ENCODE measurements at regions of chr10 and their contacts with region 1.

Region 1: DNA sequence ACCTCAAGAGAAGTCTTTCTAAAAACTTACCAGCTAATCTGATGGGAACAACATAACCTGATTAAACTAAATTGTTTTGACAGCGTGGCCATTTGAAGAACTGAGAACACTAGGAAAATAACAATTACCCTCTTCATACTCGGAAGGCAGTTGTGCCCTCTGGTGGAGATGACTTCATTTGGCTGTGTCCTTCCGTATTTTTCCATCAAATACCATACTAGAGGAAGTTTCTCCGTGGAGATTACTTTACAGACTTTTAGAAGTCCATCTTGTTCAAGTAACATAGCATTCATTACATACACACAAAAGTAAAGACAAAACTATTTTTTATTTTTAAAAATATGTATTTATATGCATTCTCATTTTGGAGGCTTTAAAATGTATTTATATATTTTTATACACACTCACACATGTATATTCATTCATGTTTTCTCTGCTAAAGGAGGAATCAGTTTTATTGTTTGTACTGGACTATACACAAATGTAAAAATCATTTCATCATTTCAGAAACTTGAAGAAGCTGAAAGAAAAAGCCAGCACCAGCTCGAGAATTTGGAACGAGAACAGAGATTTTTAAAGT is 25.2 kb downstream of the SMNDC1 start:
- DNase-seq: peak; percentile 73
- H3K4me3 ChIP-seq: peak overlapping the region; percentile 7
- H3K27ac ChIP-seq: no peak overlapping the region
- H3K4me1 ChIP-seq: peaks cover 21% of the 10 kb centered on the region
- CTCF ChIP-seq: peak; percentile 98

Region 2: DNA sequence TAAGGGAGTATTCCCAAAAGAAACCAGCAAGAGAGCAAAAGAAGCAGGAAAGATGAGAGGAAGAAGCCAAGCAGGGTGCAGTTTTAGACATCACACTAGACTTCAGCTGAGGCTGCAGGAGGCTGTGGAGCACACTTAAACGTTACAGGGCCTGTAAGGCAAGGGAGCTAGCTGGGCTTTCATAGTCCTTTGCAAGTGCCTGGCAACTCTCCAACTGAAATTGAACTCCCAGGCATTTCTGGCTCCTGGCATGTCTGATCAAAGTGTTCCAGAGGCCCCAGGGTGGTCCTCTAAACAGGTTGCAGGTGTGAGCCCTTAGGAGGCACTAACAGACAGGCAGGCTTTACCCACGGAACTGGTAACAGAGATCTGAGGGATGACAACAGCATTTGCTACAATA is 1106.4 kb before region 1 on chr10:
- CTCF ChIA-PET with region 1: no interaction called
- POLR2A ChIA-PET with region 1: no interaction called
- intact Hi-C with region 1: no loop called
- DNase-seq: no peak
- H3K4me3 ChIP-seq: no peak overlapping the region
- H3K27ac ChIP-seq: no peak overlapping the region
- H3K4me1 ChIP-seq: no peaks in the 10 kb centered on the region
- CTCF ChIP-seq: no peak

Region 3: DNA sequence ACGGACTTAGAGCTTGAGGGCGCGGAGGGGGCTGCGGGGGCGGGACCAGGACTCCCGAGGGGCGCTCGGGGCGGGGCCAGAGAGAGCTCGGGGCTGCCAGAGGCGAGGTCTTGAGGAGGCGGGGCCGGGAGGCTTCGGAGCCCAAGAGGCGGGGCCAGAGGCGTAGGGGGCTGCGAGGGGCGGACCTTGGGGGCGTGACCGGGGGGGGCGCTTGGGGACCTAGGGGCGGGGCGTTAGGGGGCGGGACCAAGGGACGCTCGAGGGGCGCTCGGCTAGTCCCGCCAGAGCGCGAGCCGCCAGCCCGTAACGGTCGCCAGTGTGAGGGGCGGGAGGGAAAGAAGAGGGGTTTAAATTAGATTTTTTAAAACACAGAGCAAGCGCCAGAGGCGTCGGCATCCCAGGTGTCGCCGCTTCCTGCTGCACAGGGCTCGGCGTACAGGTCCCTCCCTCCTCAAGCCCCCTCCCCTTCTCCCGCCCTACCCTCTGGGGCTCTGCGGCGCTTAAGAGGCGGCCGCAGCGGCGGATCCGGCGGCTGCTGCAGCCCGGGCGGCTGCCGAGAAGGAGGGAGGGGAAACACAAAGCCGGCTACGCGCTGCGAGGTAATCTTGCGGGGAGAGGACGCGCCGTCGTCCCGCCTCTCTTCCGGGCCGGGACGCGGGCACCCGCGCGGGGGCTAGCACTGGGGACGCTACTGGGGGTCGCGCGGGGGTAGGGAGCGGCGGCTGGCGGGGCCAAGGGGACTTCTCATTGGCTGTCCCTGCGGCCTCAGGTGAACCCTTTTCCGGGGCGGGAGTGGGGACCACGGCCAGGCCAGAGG is 271.6 kb before region 1 on chr10 and contains the start of gene ADD3:
- CTCF ChIA-PET with region 1: no interaction called
- POLR2A ChIA-PET with region 1: no interaction called
- intact Hi-C with region 1: no loop called
- DNase-seq: peak; percentile 97
- H3K4me3 ChIP-seq: peak within 1 kb of the TSS; percentile 96
- H3K27ac ChIP-seq: peak within 1 kb of the TSS; percentile 84
- H3K4me1 ChIP-seq: peaks cover 62% of the 10 kb centered on the region
- CTCF ChIP-seq: no peak
- total RNA-seq, gene ADD3: 53.3 and 75.8 TPM in 2 replicates

Region 4: GRCh38 chr10:110137142-110137545 is 142.4 kb before region 1 on chr10:
- CTCF ChIA-PET with region 1: interaction called, 3 read pairs
- POLR2A ChIA-PET with region 1: interaction called, 9 read pairs
- intact Hi-C with region 1: loop called (anchors 1 kb)
- DNase-seq: peak; percentile 83
- H3K4me3 ChIP-seq: no peak overlapping the region
- H3K27ac ChIP-seq: no peak overlapping the region
- H3K4me1 ChIP-seq: peaks cover 23% of the 10 kb centered on the region
- CTCF ChIP-seq: peak; percentile 98

Region 5: GRCh38 chr10:110241407-110241806 is 38.1 kb before region 1 on chr10:
- CTCF ChIA-PET with region 1: no interaction called
- POLR2A ChIA-PET with region 1: no interaction called
- intact Hi-C with region 1: no loop called
- DNase-seq: no peak
- H3K4me3 ChIP-seq: no peak overlapping the region
- H3K27ac ChIP-seq: no peak overlapping the region
- H3K4me1 ChIP-seq: no peaks in the 10 kb centered on the region
- CTCF ChIP-seq: no peak